Dorsolateral prefrontal cortex (tissue), 120 donors: ENCODE measurements at regions of chrX and their contacts with region 1.

Region 1: DNA sequence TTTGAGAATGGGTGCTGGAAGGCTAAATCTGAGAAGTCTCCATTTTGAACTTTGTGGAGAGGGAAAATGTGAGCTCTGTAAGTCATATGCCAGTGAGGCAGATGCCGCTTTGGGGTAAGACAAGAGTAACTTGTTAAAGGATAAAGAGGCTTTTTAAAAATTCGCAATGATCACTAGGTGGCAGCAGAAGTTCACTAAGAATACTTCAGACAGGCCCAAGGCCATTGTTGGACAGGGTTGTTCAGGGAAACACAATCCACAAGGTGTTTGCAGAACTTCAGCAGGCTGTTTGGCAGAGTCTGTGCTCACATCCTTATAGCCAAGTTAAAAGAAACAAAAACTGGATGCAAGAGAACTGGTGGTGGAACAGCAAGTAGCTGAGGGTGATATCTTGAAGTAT is 13.7 kb upstream of the PIGA start:
- DNase-seq: peak in 2 of 10 donors; percentile 5 to 13
- H3K4me3 ChIP-seq: no peak overlapping the region
- H3K27ac ChIP-seq: no peak overlapping the region
- H3K27me3 ChIP-seq: peaks cover 0 to 53% (median 5%) of the 10 kb centered on the region in 45 donors
- CTCF ChIP-seq: peak in 54 of 56 donors; percentile 34 to 78 (median 60)

Region 2: GRCh38 chrX:15299941-15300851 is 48.9 kb before region 1 on chrX:
- intact Hi-C with region 1: loop called in 1 of 2 experiments (anchors 5 kb)
- DNase-seq: no peak
- H3K4me3 ChIP-seq: no peak overlapping the region
- H3K27ac ChIP-seq: peak overlapping the region in 13 of 59 donors; percentile 0 to 61 (median 24)
- H3K27me3 ChIP-seq: peaks cover 0 to 52% (median 10%) of the 10 kb centered on the region in 45 donors
- CTCF ChIP-seq: peak; percentile 43 to 81 (median 66)

Region 3: DNA sequence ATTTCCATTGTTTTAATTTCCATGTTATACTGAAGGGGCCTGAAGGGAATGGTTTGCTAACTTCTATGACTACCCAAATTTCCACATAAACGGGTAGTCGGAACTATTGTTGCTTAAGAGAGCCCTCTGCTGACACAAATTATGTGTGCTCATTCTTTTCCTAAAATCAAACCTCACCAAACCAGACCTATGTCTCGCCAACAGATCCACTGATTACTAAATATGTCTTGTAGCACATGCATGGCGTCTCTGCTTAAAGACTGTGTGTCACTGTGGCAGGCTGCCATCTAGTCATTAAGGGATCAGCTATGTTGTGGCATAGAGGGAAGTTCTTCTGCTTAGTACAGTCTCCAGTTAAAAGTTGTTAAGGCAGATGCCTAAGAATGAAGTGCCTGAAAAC is 119.0 kb after region 1 on chrX:
- intact Hi-C with region 1: loop called (anchors 5 to 10 kb)
- DNase-seq: no peak
- H3K4me3 ChIP-seq: no peak overlapping the region
- H3K27ac ChIP-seq: no peak overlapping the region
- H3K27me3 ChIP-seq: peaks cover 0 to 46% (median 6%) of the 10 kb centered on the region in 45 donors
- CTCF ChIP-seq: peak in 53 of 56 donors; percentile 24 to 72 (median 50)

Region 4: GRCh38 chrX:15511563-15511962 is 162.5 kb after region 1 on chrX:
- intact Hi-C with region 1: no loop called
- DNase-seq: peak in 1 of 10 donors; percentile 14
- H3K4me3 ChIP-seq: no peak overlapping the region
- H3K27ac ChIP-seq: peak overlapping the region in 3 of 59 donors; percentile 5 to 23 (median 18)
- H3K27me3 ChIP-seq: peaks cover 0 to 88% (median 28%) of the 10 kb centered on the region in 45 donors
- CTCF ChIP-seq: no peak

Region 5: GRCh38 chrX:15564981-15565579 is 216.0 kb after region 1 on chrX:
- intact Hi-C with region 1: loop called in 1 of 2 experiments (anchors 10 kb)
- DNase-seq: peak; percentile 5 to 62 (median 49)
- H3K4me3 ChIP-seq: no peak overlapping the region
- H3K27ac ChIP-seq: no peak overlapping the region
- H3K27me3 ChIP-seq: peaks cover 0 to 83% (median 25%) of the 10 kb centered on the region in 45 donors
- CTCF ChIP-seq: peak in 54 of 56 donors; percentile 34 to 74 (median 55)

Region 6: GRCh38 chrX:15674841-15675489 is 325.9 kb after region 1 on chrX:
- intact Hi-C with region 1: loop called in 1 of 2 experiments (anchors 10 kb)
- DNase-seq: peak; percentile 88 to 95 (median 92)
- H3K4me3 ChIP-seq: peak overlapping the region; percentile 56 to 98 (median 81)
- H3K27ac ChIP-seq: peak overlapping the region; percentile 85 to 99 (median 96)
- H3K27me3 ChIP-seq: peaks cover 0 to 17% (median 0%) of the 10 kb centered on the region in 45 donors
- CTCF ChIP-seq: peak in 6 of 56 donors; percentile 4 to 21 (median 11)